Activated CD4-positive, alpha-beta T cell treated with anti-CD3 and anti-CD28 coated beads, Interleukin-2, amount 10 ng/mL, durations not matched to agents 24 days and 14 days (primary cell): ENCODE measurements at regions of chr10 and their contacts with region 1.

Region 1: DNA sequence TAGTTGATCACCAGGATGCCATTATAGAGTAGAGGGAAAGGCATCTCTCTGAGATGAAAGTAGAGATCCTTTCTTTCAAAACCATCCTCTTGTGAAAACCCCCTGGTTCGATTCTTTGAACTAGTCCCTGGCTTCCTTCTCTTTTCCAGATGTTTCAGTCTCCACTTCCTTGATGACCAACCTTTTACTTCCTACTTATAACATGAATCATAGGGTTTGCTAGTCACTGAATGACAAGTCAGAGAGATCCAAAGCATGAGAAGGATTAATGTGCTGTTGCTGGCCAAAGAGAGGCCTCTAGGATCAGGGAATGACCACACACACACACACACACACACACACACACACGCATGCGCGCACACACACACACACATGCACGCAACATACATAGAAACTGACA is 161.1 kb upstream of the FRMD4A start:
- DNase-seq: no peak
- H3K4me3 Mint-ChIP-seq: no peak overlapping the region
- H3K27ac Mint-ChIP-seq: no peak overlapping the region
- H3K4me1 Mint-ChIP-seq: no peaks in the 10 kb centered on the region
- H3K27me3 Mint-ChIP-seq: peaks cover 20% of the 10 kb centered on the region

Region 2: GRCh38 chr10:14904316-14904732 is 412.5 kb after region 1 on chr10:
- intact Hi-C with region 1: loop called (anchors 10 kb)
- DNase-seq: peak; percentile 76
- H3K4me3 Mint-ChIP-seq: no peak overlapping the region
- H3K27ac Mint-ChIP-seq: no peak overlapping the region
- H3K4me1 Mint-ChIP-seq: peaks cover 6% of the 10 kb centered on the region
- H3K27me3 Mint-ChIP-seq: no peaks in the 10 kb centered on the region